Breast epithelium (tissue), 4 donors: ENCODE measurements at regions of chr13 and their contacts with region 1.

Region 1: DNA sequence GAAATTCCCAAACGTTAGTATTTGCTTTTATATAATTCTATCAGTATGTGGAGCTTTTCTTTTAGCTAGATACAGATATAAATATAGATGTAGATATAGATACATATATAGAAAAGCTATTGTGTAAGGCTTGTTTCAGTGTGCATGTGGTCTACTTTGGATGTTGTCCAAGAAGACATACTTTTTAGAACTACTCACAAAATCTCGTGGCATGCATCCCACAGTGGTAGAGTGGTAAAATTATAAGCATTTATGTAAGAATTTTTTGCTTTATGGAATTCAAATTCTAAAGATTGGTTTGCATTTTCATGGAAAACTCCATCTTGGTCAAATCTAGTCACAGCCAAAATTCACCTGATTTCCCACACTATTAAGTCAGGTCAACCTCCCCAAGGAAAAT is 880.4 kb downstream of the EFNB2 start:
- DNase-seq: no peak
- H3K4me3 ChIP-seq: no peak overlapping the region
- H3K27ac ChIP-seq: no peak overlapping the region
- H3K4me1 ChIP-seq: no peaks in the 10 kb centered on the region
- H3K27me3 ChIP-seq: no peaks in the 10 kb centered on the region
- CTCF ChIP-seq: no peak
- POLR2A ChIP-seq: no peak

Region 2: DNA sequence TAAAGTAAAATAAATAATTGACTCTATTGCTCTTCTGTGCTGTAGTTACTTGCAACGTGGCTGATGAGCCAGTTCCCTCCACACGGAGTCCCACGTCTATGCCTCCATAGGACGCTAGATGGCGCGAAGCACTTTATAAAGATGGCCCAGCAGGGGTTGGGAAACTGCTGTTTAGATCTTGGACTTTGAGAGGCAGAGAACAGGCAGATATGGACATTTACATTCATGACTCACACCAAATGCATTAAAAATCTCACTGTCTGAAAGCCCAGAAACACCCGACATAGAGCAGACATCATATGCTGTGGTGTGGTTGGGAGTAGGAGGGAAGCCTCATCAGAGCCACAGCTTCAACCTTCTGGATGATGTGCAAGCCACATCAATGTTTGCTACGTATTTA is 1556.0 kb after region 1 on chr13:
- intact Hi-C with region 1: loop called (anchors 10 kb)
- DNase-seq: peak in 1 of 2 donors; percentile 52
- H3K4me3 ChIP-seq: peak overlapping the region; percentile 8 to 25 (median 10)
- H3K27ac ChIP-seq: no peak overlapping the region
- H3K4me1 ChIP-seq: no peaks in the 10 kb centered on the region
- H3K27me3 ChIP-seq: no peaks in the 10 kb centered on the region
- CTCF ChIP-seq: peak; percentile 57 to 73 (median 69)
- POLR2A ChIP-seq: no peak